H1 (cell line): ENCODE measurements at regions of chr19 and their contacts with region 1.

Region 1: GRCh38 chr19:572140-572742 is at the start of gene BSG:
- DNase-seq: peak; percentile 94 to 97
- H3K4me3 ChIP-seq: peak within 1 kb of the TSS; percentile 93 to 97 (median 94)
- H3K27ac ChIP-seq: peak within 1 kb of the TSS; percentile 81
- H3K4me1 ChIP-seq: peaks cover 0 to 21% (median 11%) of the 10 kb centered on the region in 4 experiments; a peak in 5 of 7 replicates
- H3K27me3 ChIP-seq: peaks cover 0 to 3% (median 0%) of the 10 kb centered on the region in 4 experiments; a peak in 1 of 7 replicates
- CTCF ChIP-seq: no peak
- EP300 ChIP-seq: peak in 1 of 2 experiments; percentile 36; a peak in 1 of 3 replicates
- POLR2A ChIP-seq: peak; percentile 95 to 98
- RAD21 ChIP-seq: no peak
- total RNA-seq, gene BSG: 726 and 743 TPM in 2 replicates

Region 2: DNA sequence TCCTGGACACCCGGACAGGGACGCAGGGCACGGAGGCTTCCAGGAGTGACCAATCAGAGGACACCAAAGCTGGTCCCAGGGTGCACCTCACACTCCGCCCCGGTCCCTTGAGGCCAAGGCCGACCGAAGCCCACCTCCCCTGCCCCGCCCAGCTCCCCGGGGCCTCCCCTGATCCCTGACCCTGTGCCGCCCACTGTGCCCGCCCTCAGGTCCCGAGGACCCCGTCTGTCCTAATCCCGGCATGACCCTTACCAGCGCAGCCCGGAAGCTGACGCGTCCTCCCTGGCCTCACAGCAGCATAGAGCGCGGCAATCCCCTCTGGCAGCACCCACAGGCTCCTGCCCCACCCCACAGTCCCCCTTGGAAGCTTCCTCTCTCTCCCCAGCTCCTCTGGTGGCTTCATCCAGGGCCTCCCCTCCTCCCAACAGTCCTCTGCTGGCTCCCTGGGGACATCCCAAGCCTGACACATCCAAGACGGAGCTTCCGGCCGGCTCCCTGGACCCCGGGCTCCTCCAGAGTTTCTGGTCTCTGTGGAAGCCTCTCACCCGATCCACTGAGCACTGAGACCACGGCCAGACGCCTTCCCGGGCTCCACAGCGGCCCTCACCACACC is 48.1 kb before region 1 on chr19:
- CTCF ChIA-PET with region 1: interaction called, 3 read pairs
- POLR2A ChIA-PET with region 1: interaction called, 10 read pairs
- DNase-seq: no peak
- H3K4me3 ChIP-seq: no peak overlapping the region
- H3K27ac ChIP-seq: no peak overlapping the region
- H3K4me1 ChIP-seq: peaks cover 0 to 3% (median 0%) of the 10 kb centered on the region in 4 experiments; a peak in 2 of 7 replicates
- H3K27me3 ChIP-seq: peaks cover 0 to 5% (median 0%) of the 10 kb centered on the region in 4 experiments; a peak in 1 of 7 replicates
- CTCF ChIP-seq: no peak
- EP300 ChIP-seq: no peak
- POLR2A ChIP-seq: no peak
- RAD21 ChIP-seq: no peak

Region 3: GRCh38 chr19:558770-559439 is 13.3 kb before region 1 on chr19:
- CTCF ChIA-PET with region 1: interaction called, 5 read pairs
- POLR2A ChIA-PET with region 1: interaction called, 38 read pairs
- DNase-seq: no peak
- H3K4me3 ChIP-seq: no peak overlapping the region
- H3K27ac ChIP-seq: no peak overlapping the region
- H3K4me1 ChIP-seq: peaks cover 0 to 2% (median under 1%) of the 10 kb centered on the region in 4 experiments; a peak in 4 of 7 replicates
- H3K27me3 ChIP-seq: no peaks in the 10 kb centered on the region
- CTCF ChIP-seq: no peak
- EP300 ChIP-seq: no peak
- POLR2A ChIP-seq: no peak
- RAD21 ChIP-seq: no peak

Region 4: GRCh38 chr19:588093-588740 is 16.0 kb after region 1 on chr19:
- CTCF ChIA-PET with region 1: interaction called, 51 read pairs
- POLR2A ChIA-PET with region 1: interaction called, 78 read pairs
- DNase-seq: peak; percentile 61 to 90
- H3K4me3 ChIP-seq: peak overlapping the region in 1 of 4 experiments; percentile 29; a peak in 1 of 8 replicates
- H3K27ac ChIP-seq: no peak overlapping the region
- H3K4me1 ChIP-seq: peaks cover 0 to 10% (median 3%) of the 10 kb centered on the region in 4 experiments; a peak in 5 of 7 replicates
- H3K27me3 ChIP-seq: peaks cover 23 to 39% (median 31%) of the 10 kb centered on the region in 4 experiments
- CTCF ChIP-seq: peak; percentile 75 to 88 (median 75)
- EP300 ChIP-seq: no peak
- POLR2A ChIP-seq: no peak
- RAD21 ChIP-seq: peak; percentile 32 to 61

Region 5: GRCh38 chr19:633068-633785 is 61.0 kb after region 1 on chr19 and contains the start of gene POLRMT:
- CTCF ChIA-PET with region 1: interaction called, 13 read pairs
- POLR2A ChIA-PET with region 1: interaction called, 11 read pairs
- DNase-seq: peak; percentile 93 to 95
- H3K4me3 ChIP-seq: peak within 1 kb of the TSS; percentile 88 to 99 (median 97)
- H3K27ac ChIP-seq: peak within 1 kb of the TSS; percentile 62
- H3K4me1 ChIP-seq: peaks cover 0 to 8% (median 3%) of the 10 kb centered on the region in 4 experiments; a peak in 4 of 7 replicates
- H3K27me3 ChIP-seq: peaks cover 0 to 11% (median 2%) of the 10 kb centered on the region in 4 experiments; a peak in 3 of 7 replicates
- CTCF ChIP-seq: no peak
- EP300 ChIP-seq: no peak
- POLR2A ChIP-seq: peak in 1 of 2 experiments; percentile 63; a peak in 2 of 3 replicates
- RAD21 ChIP-seq: no peak
- total RNA-seq, gene POLRMT: 110 and 111 TPM in 2 replicates

Region 6: GRCh38 chr19:688214-688613 is 116.0 kb after region 1 on chr19:
- CTCF ChIA-PET with region 1: no interaction called
- POLR2A ChIA-PET with region 1: no interaction called
- DNase-seq: no peak
- H3K4me3 ChIP-seq: no peak overlapping the region
- H3K27ac ChIP-seq: no peak overlapping the region
- H3K4me1 ChIP-seq: no peaks in the 10 kb centered on the region
- H3K27me3 ChIP-seq: 0 out of 7 replicates have a peak, but pooled peaks cover 0 to 2% (median 0%) of the 10 kb centered on the region in 4 experiments
- CTCF ChIP-seq: no peak
- EP300 ChIP-seq: no peak
- POLR2A ChIP-seq: no peak
- RAD21 ChIP-seq: no peak